ENCODE measurements at regions of chr7 and their contacts with region 1.

Region 1: GRCh38 chr7:16982640-16983350 is 101.0 kb upstream of the AGR3 start:
- DNase-seq: peak; percentile 64
- ATAC-seq: no peak
- H3K4me3 ChIP-seq: no peak overlapping the region
- H3K27ac ChIP-seq: peak overlapping the region; percentile 23
- H3K4me1 ChIP-seq: peaks cover 43% of the 10 kb centered on the region
- H3K27me3 ChIP-seq: no peaks in the 10 kb centered on the region
- CTCF ChIP-seq: peak; percentile 93

Region 2: GRCh38 chr7:16891338-16891737 is 91.5 kb before region 1 on chr7:
- CTCF ChIA-PET with region 1: interaction called, 4 read pairs
- POLR2A ChIA-PET with region 1: no interaction called
- intact Hi-C with region 1: loop called (anchors 1 kb)
- DNase-seq: peak; percentile 85
- ATAC-seq: peak; percentile 87
- H3K4me3 ChIP-seq: no peak overlapping the region
- H3K27ac ChIP-seq: peak overlapping the region; percentile 45
- H3K4me1 ChIP-seq: peaks cover 37% of the 10 kb centered on the region
- H3K27me3 ChIP-seq: no peaks in the 10 kb centered on the region
- CTCF ChIP-seq: peak; percentile 88

Region 3: DNA sequence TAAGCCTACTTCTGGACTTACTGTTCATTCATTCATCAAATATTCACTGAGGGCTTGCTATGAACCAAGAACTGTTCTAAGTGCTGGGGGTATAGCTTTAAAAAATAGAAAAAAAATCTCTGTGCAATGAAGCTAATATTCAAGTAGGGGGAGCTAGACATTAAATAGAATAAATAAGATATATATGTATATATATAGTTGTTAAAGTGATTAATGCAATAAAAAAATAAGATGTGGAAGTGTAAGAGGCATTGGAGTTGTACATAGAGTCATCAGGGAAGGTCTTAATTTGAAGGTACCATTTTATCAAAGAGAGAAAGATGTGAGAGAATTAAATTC is 80.2 kb after region 1 on chr7:
- CTCF ChIA-PET with region 1: no interaction called
- POLR2A ChIA-PET with region 1: no interaction called
- intact Hi-C with region 1: loop called (anchors 5 kb)
- DNase-seq: peak; percentile 48
- ATAC-seq: 0 out of 2 replicates have a peak, but pooled peaks have one; percentile 8
- H3K4me3 ChIP-seq: no peak overlapping the region
- H3K27ac ChIP-seq: 0 out of 2 replicates have a peak overlapping the region, but pooled peaks have one; percentile 1
- H3K4me1 ChIP-seq: peaks cover 47% of the 10 kb centered on the region
- H3K27me3 ChIP-seq: no peaks in the 10 kb centered on the region
- CTCF ChIP-seq: peak; percentile 36; the same call in 1 of the 2 replicates

Region 4: DNA sequence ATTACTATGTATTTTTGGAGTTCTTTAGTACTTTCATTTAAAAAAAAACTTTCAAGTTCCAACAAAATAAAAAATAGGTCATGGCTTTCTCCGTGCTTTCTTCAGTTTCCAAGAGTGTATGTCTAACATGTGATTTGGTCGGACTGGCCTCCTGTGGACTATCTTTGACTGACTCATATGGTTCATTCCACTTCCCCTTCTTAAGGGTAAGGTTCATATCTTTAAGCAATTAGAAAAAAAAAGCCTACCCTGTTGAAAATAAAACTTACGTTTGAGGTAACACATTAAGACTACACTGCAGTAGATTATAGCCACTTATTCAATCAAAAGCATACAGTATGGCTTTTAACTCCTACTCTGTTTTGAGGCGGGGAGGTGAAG is 202.9 kb after region 1 on chr7:
- CTCF ChIA-PET with region 1: no interaction called
- POLR2A ChIA-PET with region 1: no interaction called
- intact Hi-C with region 1: loop called (anchors 1 kb)
- DNase-seq: peak; percentile 65
- ATAC-seq: peak; percentile 93
- H3K4me3 ChIP-seq: no peak overlapping the region
- H3K27ac ChIP-seq: peak overlapping the region; percentile 85
- H3K4me1 ChIP-seq: peaks cover 22% of the 10 kb centered on the region
- H3K27me3 ChIP-seq: no peaks in the 10 kb centered on the region
- CTCF ChIP-seq: no peak

Region 5: GRCh38 chr7:17275749-17276671 is 293.2 kb after region 1 on chr7:
- CTCF ChIA-PET with region 1: interaction called, 3 read pairs
- POLR2A ChIA-PET with region 1: no interaction called
- intact Hi-C with region 1: loop called (anchors 1 kb)
- DNase-seq: peak; percentile 92
- ATAC-seq: peak; percentile 91
- H3K4me3 ChIP-seq: peak overlapping the region; percentile 8; the same call in 1 of the 2 replicates
- H3K27ac ChIP-seq: peak overlapping the region; percentile 78
- H3K4me1 ChIP-seq: peaks cover 34% of the 10 kb centered on the region
- H3K27me3 ChIP-seq: no peaks in the 10 kb centered on the region
- CTCF ChIP-seq: no peak

Region 6: DNA sequence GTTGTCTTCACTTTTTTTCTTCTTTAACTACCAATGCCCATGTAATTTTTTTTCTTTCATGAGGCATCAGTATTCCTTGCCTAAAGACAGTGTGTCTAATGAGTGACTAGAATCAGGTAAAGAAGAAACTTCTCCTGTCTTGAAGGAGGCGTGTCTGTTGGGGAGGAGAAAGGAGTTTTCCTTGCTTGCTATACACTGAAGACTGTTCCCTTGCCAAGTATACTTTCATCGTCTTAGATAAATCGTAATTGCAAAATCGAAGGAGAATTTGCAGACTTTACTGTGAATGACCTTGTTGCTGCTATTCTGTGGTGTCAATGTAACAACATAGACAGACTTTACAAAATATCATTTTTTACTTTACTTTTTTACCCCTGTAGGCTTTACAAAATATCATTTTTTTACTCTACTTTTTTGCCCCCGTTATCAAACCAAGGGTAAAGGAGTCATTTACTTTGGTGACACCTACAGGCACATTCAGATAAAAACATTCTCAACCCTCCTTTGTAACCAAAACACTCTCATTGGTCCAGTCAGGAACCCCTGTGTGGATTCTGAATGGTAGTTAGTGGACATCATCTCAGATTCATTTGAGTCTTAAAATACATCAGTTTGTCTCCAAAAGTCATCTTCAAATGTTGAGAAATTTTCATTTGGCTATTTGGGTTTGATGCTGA is 548.1 kb after region 1 on chr7:
- CTCF ChIA-PET with region 1: no interaction called
- POLR2A ChIA-PET with region 1: no interaction called
- intact Hi-C with region 1: loop called (anchors 1 kb)
- DNase-seq: peak; percentile 36
- ATAC-seq: no peak
- H3K4me3 ChIP-seq: no peak overlapping the region
- H3K27ac ChIP-seq: no peak overlapping the region
- H3K4me1 ChIP-seq: peaks cover 36% of the 10 kb centered on the region
- H3K27me3 ChIP-seq: no peaks in the 10 kb centered on the region
- CTCF ChIP-seq: peak; percentile 70

Measured in PC-3 (cell line).